Calu3 (cell line): ENCODE measurements at regions of chr7 and their contacts with region 1.

Region 1: DNA sequence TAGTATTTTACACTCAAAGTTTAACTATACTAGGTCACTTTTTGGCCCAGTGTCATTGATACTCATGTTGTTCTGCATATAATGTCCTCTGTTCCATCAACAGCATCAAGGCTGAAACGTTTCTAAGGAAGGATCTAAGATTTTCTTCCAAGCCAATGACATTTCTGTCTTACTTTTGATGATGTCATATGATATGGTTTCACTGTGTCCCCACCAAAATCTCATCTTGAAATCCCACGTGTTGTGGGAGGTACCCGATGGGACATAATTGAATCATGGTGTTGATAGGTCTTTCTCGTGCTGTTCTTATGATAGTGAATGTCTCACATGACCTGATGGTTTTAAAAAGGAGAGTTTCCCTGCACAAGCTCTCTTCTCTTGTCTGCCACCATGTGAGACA is 36.3 kb upstream of the TSPAN12 start:
- DNase-seq: no peak
- H3K4me3 Mint-ChIP-seq: no peak overlapping the region
- H3K27ac Mint-ChIP-seq: no peak overlapping the region
- H3K4me1 Mint-ChIP-seq: no peaks in the 10 kb centered on the region
- H3K27me3 Mint-ChIP-seq: peaks cover 17% of the 10 kb centered on the region
- CTCF ChIP-seq: no peak

Region 2: DNA sequence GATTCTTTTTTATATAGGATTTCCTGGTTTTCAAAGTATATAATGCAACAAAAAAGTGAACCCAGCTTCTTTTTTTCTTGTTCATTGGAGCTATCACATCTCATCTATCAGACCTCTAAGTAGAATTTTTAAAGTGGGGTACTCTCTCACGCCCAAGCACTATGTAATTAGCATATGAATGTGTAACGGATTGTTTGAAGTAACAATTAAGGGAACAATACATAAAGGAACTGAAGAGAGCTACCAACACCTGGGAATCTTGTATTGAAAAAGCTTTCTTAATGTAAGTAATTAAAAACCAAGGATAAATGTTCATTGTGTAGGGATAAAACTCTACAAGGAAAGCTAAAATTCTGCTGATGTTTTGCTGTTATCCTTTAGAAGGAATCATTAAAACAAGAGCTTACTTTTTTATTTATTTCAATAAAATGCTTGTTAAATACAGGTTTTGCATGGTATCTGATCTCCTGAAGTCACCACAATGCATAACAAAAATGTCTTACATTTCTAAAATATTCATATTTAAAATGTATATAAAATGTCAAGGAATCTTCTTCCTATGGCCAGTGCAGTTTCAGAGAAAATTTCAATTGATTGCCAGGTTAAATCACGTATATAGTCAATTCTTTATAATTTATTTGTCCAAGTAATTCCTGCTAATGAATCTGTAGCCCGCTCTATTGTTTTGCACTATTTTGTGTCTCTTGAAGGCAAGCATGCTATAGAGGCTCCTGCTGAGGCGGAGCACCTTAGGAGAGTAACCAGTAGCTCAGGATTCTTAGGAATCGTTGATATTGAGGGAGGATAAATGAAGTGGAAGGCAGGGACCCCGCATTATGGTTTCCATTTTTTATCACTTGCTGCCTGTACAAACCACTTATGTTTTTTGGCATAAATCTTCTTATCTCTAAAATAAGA is 1030.3 kb after region 1 on chr7:
- CTCF ChIA-PET with region 1: interaction called, 10 read pairs
- intact Hi-C with region 1: no loop called
- DNase-seq: no peak
- H3K4me3 Mint-ChIP-seq: no peak overlapping the region
- H3K27ac Mint-ChIP-seq: no peak overlapping the region
- H3K4me1 Mint-ChIP-seq: no peaks in the 10 kb centered on the region
- H3K27me3 Mint-ChIP-seq: no peaks in the 10 kb centered on the region
- CTCF ChIP-seq: no peak